ENCODE measurements at regions of chr16 and their contacts with region 1.

Region 1: DNA sequence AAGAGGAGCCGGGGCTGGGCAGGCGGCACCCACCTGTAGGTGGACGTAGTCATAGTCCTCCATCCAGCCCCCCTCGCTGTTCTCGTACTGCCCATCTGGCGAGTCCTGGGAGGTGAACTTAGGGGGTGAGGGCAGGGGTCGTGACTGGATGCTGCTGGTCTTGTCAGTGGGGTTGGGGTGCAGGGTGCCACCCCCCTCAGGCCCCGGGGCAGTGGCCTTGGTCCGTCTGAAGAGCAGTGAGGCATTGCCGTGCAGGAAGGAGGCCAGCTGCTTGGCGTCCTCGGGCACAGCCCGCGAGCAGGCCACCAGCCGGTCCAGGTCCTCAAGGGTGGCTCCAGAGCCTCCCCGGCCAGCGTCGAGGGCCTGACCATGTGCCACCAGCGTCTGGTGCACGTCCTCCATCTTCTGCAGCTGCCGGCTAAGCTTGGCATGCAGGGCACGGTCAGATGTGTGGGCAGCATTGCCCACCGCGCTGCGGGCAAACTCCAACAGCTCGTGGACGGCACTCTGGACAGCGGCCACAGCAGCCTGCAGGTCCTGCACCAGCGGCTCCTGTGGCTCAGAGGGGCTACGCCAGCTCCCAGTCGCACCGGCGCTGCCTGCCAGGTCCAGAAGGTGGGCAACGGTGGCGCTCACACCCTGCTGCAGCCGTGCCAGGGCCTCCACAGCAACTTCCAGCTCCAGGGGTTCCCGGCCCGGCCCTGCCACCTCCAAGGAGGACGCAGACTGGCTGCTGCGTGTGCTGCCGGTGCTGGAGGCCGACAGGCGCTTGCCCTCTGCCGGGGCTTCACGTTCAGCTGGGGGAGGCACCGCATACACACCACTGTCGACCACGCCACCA is 16.3 kb downstream of the CTRB1 start:
- DNase-seq: no peak
- H3K4me3 Mint-ChIP-seq: no peak overlapping the region
- H3K27ac Mint-ChIP-seq: no peak overlapping the region
- H3K4me1 Mint-ChIP-seq: peaks cover 11% of the 10 kb centered on the region
- H3K27me3 Mint-ChIP-seq: no peaks in the 10 kb centered on the region
- CTCF ChIP-seq: no peak

Region 2: GRCh38 chr16:75218256-75219070 is 16.6 kb before region 1 on chr16 and contains the start of gene CTRB1:
- CTCF ChIA-PET with region 1: interaction called, 10 read pairs
- POLR2A ChIA-PET with region 1: no interaction called
- intact Hi-C with region 1: no loop called
- DNase-seq: no peak
- H3K4me3 Mint-ChIP-seq: no peak within 1 kb of the TSS
- H3K27ac Mint-ChIP-seq: no peak within 1 kb of the TSS
- H3K4me1 Mint-ChIP-seq: no peaks in the 10 kb centered on the region
- H3K27me3 Mint-ChIP-seq: no peaks in the 10 kb centered on the region
- CTCF ChIP-seq: no peak
- total RNA-seq, gene CTRB1: not detected in 2 replicates

Region 3: DNA sequence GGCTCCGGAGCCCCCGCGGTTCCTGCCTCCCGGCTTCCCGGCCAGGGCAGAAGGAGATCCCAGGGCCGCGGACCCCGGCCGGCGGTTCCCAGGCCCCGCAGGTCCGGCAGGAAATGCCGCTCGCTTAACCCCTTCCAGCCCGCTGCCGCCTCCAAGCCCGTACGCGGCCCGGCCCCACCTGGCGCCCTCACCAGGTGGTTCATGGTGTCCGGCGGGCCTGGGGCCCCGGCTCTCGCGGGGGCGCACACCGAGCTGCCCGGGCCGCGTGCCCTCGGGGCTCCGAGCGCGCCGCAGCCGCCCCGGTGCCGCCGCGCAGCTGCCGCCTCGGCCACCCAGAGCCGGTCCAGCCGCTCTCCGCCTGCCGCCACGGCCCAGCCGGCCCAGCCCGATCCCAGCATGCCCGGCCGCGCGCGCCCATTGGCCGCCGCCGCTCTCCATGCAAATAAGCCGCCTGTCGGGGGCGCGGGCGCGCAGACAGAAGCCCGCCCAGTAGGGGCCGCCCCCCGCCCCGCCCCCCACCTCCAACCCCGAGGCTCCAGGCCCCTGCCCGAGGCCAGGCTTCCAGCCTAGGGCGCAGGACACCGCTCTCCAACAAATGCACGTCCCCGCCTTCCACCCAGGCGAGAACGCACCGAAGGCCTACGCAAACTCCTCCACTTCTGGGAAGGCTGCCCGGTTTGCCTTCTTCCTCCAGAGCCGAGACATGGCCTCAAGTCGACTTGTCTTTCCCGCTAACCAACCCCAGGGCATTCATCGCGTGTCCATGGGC is 16.4 kb after region 1 on chr16 and contains the start of gene BCAR1:
- CTCF ChIA-PET with region 1: interaction called, 26 read pairs
- POLR2A ChIA-PET with region 1: interaction called, 11 read pairs
- intact Hi-C with region 1: no loop called
- DNase-seq: peak; percentile 81
- H3K4me3 Mint-ChIP-seq: peak within 1 kb of the TSS; percentile 75
- H3K27ac Mint-ChIP-seq: peak within 1 kb of the TSS; percentile 82
- H3K4me1 Mint-ChIP-seq: peaks cover 32% of the 10 kb centered on the region
- H3K27me3 Mint-ChIP-seq: no peaks in the 10 kb centered on the region
- CTCF ChIP-seq: no peak
- total RNA-seq, gene BCAR1: 58.6 and 68.1 TPM in 2 replicates

Region 4: GRCh38 chr16:75311383-75311938 is 76.4 kb after region 1 on chr16:
- CTCF ChIA-PET with region 1: interaction called, 46 read pairs
- POLR2A ChIA-PET with region 1: interaction called, 30 read pairs
- intact Hi-C with region 1: no loop called
- DNase-seq: no peak
- H3K4me3 Mint-ChIP-seq: no peak overlapping the region
- H3K27ac Mint-ChIP-seq: no peak overlapping the region
- H3K4me1 Mint-ChIP-seq: peaks cover 19% of the 10 kb centered on the region
- H3K27me3 Mint-ChIP-seq: no peaks in the 10 kb centered on the region
- CTCF ChIP-seq: no peak

Region 5: DNA sequence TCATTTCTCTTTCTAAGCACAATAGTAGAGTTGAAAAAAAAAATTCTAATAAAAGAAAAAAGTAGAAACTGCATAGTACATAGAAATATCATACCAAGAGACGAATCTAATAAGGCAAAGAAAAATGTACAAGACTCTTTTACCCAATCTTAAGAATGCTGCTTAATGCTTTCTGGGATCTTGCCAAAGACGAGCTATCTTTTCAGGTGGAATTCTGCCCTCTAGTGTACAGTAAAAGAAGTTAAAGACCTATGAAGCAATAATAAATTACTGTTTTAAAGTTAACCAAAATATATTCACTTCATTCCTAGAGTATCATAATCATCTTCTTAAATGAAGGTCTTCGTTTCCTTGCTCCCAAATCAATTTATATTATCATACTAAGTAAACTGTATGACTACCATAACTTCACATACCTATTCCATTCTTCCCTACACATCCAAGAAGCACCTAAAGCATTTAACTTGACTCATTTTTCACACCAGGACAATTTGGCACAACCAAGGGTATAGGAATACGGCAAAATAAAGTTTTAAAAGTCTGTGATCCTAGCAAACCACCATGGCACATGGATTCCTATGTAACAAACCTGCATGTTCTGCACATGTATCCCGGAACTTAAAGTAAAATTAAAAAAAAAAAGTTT is 150.6 kb after region 1 on chr16:
- CTCF ChIA-PET with region 1: interaction called, 106 read pairs
- POLR2A ChIA-PET with region 1: interaction called, 10 read pairs
- intact Hi-C with region 1: loop called (anchors 1 kb)
- DNase-seq: peak; percentile 85
- H3K4me3 Mint-ChIP-seq: no peak overlapping the region
- H3K27ac Mint-ChIP-seq: no peak overlapping the region
- H3K4me1 Mint-ChIP-seq: peaks cover 12% of the 10 kb centered on the region
- H3K27me3 Mint-ChIP-seq: no peaks in the 10 kb centered on the region
- CTCF ChIP-seq: peak; percentile 66

Region 6: DNA sequence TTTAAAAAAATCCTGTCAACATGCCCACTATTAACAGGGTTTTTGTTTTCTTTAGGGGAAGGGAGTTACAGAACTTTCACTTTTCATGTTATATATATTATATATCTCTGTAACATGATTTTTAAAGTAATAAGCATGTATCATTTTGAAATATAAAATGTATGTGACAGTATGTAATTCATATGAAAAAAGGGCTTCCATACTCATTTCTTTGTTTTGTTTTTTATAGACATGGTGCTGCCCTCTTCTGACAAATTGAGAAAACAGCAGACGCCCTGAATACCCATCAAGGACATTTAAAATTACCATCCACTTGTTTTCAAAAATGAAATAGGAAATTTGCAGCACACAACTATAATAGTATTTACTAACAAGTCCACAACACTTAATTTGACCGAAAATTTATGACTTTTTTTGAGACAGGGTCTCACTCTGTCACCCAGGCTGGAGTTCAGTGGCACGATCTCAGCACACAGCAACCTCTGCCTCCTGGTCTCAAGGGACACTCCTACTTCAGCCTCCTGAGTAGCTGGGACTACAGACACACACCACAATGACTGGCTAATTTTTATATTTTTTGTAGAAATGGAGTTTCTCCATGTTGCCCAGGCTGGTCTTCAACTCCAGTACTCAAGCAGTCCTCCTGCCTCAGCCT is 167.9 kb after region 1 on chr16:
- CTCF ChIA-PET with region 1: interaction called, 30 read pairs
- POLR2A ChIA-PET with region 1: no interaction called
- intact Hi-C with region 1: loop called (anchors 5 kb)
- DNase-seq: peak; percentile 47
- H3K4me3 Mint-ChIP-seq: no peak overlapping the region
- H3K27ac Mint-ChIP-seq: no peak overlapping the region
- H3K4me1 Mint-ChIP-seq: peaks cover 5% of the 10 kb centered on the region
- H3K27me3 Mint-ChIP-seq: no peaks in the 10 kb centered on the region
- CTCF ChIP-seq: peak; percentile 56

Measured in MCF 10A (cell line).